Endothelial cell of umbilical vein (primary cell): ENCODE measurements at regions of chr3 and their contacts with region 1.

Region 1: GRCh38 chr3:87218560-87218959 is 8.5 kb upstream of the CHMP2B start:
- DNase-seq: no peak
- H3K4me3 ChIP-seq: no peak overlapping the region
- H3K27ac ChIP-seq: no peak overlapping the region
- H3K4me1 ChIP-seq: no peaks in the 10 kb centered on the region
- H3K27me3 ChIP-seq: peaks cover 2 to 52% of the 10 kb centered on the region in 2 experiments
- CTCF ChIP-seq: no peak
- POLR2A ChIP-seq: no peak

Region 2: GRCh38 chr3:86887876-86888275 is 330.7 kb before region 1 on chr3:
- CTCF ChIA-PET with region 1: no interaction called
- POLR2A ChIA-PET with region 1: no interaction called
- dilution Hi-C with region 1: no loop called
- intact Hi-C with region 1: no loop called
- DNase-seq: no peak
- H3K4me3 ChIP-seq: no peak overlapping the region
- H3K27ac ChIP-seq: no peak overlapping the region
- H3K4me1 ChIP-seq: no peaks in the 10 kb centered on the region
- H3K27me3 ChIP-seq: no peaks in the 10 kb centered on the region
- CTCF ChIP-seq: no peak
- POLR2A ChIP-seq: no peak

Region 3: DNA sequence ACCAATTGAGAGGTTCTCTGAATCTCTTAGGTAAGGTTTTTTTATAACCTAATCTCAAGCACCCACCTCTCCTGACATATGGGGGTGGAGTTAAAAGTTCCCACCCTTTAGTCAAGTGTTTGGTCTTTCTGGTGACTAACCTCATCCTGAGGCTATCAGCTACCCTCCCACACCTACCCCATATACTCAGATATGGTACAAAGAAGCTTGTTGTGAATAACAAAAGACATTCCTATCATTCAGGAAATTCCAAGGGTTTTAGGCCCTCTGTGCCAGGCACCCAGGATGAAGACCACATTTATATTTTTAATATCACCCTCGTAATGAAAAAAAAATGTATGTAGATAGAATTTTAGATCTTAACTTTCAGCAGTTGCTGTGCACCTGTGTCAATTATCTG is 17.5 kb after region 1 on chr3:
- CTCF ChIA-PET with region 1: no interaction called
- POLR2A ChIA-PET with region 1: no interaction called
- dilution Hi-C with region 1: no loop called
- intact Hi-C with region 1: loop called (anchors 1 kb)
- DNase-seq: no peak
- H3K4me3 ChIP-seq: no peak overlapping the region
- H3K27ac ChIP-seq: no peak overlapping the region
- H3K4me1 ChIP-seq: no peaks in the 10 kb centered on the region
- H3K27me3 ChIP-seq: no peaks in the 10 kb centered on the region
- CTCF ChIP-seq: no peak
- POLR2A ChIP-seq: no peak